Activated T-helper 2 cell treated with anti-CD3 and anti-CD28 coated beads, Interferon-gamma antibody, Interleukin-2, Interleukin-4, amounts not matched to agents 10 μg/mL and 5 μg/mL and 100 μg/mL, durations not matched to agents 14 hours and 24 hours and 36 hours (primary cell): ENCODE measurements at regions of chr6 and their contacts with region 1.

Region 1: GRCh38 chr6:52162940-52163908 is 23.0 kb upstream of the IL17A start:
- DNase-seq: no peak
- H3K4me3 Mint-ChIP-seq: no peak overlapping the region
- H3K27ac Mint-ChIP-seq: peak overlapping the region; percentile 87
- H3K4me1 Mint-ChIP-seq: peaks cover 35% of the 10 kb centered on the region
- H3K27me3 Mint-ChIP-seq: peaks cover 35% of the 10 kb centered on the region

Region 2: GRCh38 chr6:52227495-52227894 is 64.3 kb after region 1 on chr6:
- intact Hi-C with region 1: loop called (anchors 1 kb)
- DNase-seq: peak; percentile 71
- H3K4me3 Mint-ChIP-seq: no peak overlapping the region
- H3K27ac Mint-ChIP-seq: no peak overlapping the region
- H3K4me1 Mint-ChIP-seq: peaks cover 37% of the 10 kb centered on the region
- H3K27me3 Mint-ChIP-seq: peaks cover 60% of the 10 kb centered on the region

Region 3: GRCh38 chr6:52254731-52255378 is 91.6 kb after region 1 on chr6:
- intact Hi-C with region 1: loop called (anchors 2 kb)
- DNase-seq: no peak
- H3K4me3 Mint-ChIP-seq: no peak overlapping the region
- H3K27ac Mint-ChIP-seq: no peak overlapping the region
- H3K4me1 Mint-ChIP-seq: peaks cover 35% of the 10 kb centered on the region
- H3K27me3 Mint-ChIP-seq: peaks cover 31% of the 10 kb centered on the region

Region 4: GRCh38 chr6:52389626-52390360 is 226.6 kb after region 1 on chr6:
- intact Hi-C with region 1: loop called (anchors 1 kb)
- DNase-seq: peak; percentile 55
- H3K4me3 Mint-ChIP-seq: peak overlapping the region; percentile 59
- H3K27ac Mint-ChIP-seq: peak overlapping the region; percentile 84
- H3K4me1 Mint-ChIP-seq: peaks cover 78% of the 10 kb centered on the region
- H3K27me3 Mint-ChIP-seq: no peaks in the 10 kb centered on the region

Region 5: DNA sequence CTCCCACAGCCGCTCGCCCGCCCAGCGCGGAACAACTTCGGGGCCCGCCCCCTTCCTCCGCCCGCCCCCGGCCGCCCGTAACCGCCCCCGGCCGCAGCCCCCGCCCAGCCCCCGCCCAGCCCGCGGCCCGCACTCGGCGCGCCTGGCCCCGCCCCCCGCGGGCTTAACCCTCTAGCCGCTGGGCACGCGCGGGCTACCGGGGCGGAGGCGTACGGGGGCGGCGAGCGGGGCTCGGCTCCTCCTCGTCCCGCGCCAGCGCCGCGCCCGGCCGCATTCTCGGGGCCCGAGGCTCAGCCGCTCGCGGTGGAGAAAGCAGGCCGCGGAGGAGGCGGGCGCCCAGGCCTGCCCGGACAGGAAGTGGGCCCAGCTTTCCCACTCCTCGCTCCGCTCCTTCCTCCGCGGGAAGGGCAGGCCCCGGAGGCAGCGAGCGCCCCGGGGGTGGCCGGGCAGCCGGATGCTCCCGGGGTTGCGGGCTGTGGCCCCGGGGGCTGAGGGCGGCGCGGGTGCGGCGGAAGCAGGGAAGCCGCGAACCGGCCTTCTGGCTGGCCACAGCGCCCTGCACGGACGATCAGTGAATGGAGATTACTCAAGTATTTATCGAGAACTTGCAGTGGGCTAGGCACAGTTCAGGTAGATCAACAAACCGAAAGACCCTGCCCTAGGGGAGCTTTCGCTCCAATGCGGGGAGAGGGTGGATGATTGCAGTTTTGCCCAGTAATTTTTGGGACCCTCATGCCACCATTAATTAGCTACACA is 414.0 kb after region 1 on chr6 and contains the start of gene TRAM2:
- intact Hi-C with region 1: loop called (anchors 10 kb)
- DNase-seq: peak; percentile 70
- H3K4me3 Mint-ChIP-seq: peak within 1 kb of the TSS; percentile 85
- H3K27ac Mint-ChIP-seq: peak within 1 kb of the TSS; percentile 77
- H3K4me1 Mint-ChIP-seq: peaks cover 37% of the 10 kb centered on the region
- H3K27me3 Mint-ChIP-seq: peaks cover 2% of the 10 kb centered on the region
- total RNA-seq, gene TRAM2: 4.7 TPM in 2 replicates

Region 6: DNA sequence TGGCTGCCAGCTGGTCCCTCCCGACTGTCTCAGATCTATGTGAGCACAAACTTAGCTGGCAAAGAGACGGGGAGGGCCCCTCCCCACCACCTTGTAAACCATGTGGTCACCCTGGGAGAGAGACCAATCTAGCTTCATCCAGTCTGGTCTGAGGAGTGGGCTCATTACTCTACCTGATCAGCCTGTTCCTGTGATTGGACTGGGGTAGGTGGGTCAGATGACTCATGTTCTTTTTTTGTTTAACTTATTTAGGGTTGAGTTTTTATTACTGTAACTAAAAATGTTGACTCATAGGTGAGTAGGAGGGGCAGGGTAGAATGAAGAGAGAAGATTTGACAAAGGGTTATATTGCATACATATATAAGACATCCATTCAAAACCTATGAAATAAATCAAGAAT is 827.1 kb after region 1 on chr6:
- intact Hi-C with region 1: loop called (anchors 2 kb)
- DNase-seq: no peak
- H3K4me3 Mint-ChIP-seq: peak overlapping the region; percentile 48
- H3K27ac Mint-ChIP-seq: peak overlapping the region; percentile 90
- H3K4me1 Mint-ChIP-seq: peaks cover 56% of the 10 kb centered on the region
- H3K27me3 Mint-ChIP-seq: peaks cover under 1% of the 10 kb centered on the region